Lower leg skin (tissue), 4 donors: ENCODE measurements at regions of chr5 and their contacts with region 1.

Region 1: DNA sequence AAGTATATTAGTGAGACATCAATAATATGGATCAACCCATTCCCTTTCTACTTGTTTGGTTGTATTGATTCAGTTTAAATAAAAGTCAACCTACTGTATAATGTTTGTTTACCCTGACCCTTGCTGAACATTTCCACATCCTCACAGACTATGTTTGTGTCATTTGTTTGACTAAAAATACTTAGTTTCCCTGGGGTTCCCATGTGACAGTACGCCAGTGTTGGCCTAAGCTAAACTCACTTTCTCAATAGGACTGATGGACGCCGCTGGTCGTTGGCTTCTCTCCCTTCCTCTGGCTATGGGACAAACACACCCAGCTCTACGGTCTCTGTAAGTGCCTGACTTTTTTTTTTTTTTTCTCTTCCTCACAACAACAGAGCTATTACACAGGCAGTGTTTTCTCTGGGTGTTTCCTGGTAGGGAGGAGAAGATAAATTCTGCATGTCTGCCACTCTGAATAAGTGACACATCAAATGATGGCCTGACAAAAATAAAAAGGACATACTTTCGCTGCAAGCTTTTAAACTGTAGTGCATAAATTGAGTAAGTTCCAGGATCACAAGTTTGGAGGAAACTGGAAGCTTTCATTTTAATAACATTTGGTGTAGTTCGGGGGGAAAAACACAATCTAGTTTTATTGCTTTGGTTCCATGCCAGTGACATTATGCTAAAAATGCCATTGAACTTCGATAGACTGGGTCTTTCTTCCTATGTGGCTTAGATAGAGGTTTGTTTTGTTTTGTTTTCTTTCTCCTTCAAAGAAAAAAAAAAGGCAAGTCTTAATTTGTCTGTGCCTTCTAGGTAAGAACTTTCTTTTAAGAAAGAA is 101.0 kb downstream of the CD180 start:
- DNase-seq: peak; percentile 88 to 95
- H3K4me3 ChIP-seq: no peak overlapping the region
- CTCF ChIP-seq: no peak
- POLR2A ChIP-seq: no peak

Region 2: DNA sequence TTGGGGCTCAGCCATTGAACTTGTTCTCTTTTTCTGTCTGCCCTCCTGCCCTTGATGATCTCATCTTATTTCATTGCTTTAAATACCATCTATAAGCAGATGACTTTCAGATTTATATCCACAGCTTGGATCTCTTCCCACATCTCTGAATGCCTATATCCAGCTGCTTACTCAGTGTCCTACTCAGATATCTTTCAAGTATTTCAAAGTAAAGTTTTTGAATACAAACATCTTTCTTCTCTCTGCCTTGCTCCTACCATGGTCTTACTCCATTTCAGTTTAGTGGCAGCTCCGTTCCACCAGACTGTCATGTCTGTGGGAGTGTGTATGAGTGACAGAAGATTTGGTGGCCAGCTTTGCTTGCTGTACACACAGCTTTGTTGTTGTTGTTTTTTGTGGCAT is 1109.5 kb before region 1 on chr5:
- intact Hi-C with region 1: no loop called
- DNase-seq: no peak
- H3K4me3 ChIP-seq: no peak overlapping the region
- CTCF ChIP-seq: no peak
- POLR2A ChIP-seq: no peak

Region 3: GRCh38 chr5:66609615-66610014 is 485.9 kb before region 1 on chr5:
- intact Hi-C with region 1: no loop called
- DNase-seq: no peak
- H3K4me3 ChIP-seq: no peak overlapping the region
- CTCF ChIP-seq: no peak
- POLR2A ChIP-seq: no peak

Region 4: GRCh38 chr5:67129768-67130167 is 34.2 kb after region 1 on chr5:
- intact Hi-C with region 1: loop called (anchors 1 kb)
- DNase-seq: no peak
- H3K4me3 ChIP-seq: no peak overlapping the region
- CTCF ChIP-seq: no peak
- POLR2A ChIP-seq: no peak

Region 5: DNA sequence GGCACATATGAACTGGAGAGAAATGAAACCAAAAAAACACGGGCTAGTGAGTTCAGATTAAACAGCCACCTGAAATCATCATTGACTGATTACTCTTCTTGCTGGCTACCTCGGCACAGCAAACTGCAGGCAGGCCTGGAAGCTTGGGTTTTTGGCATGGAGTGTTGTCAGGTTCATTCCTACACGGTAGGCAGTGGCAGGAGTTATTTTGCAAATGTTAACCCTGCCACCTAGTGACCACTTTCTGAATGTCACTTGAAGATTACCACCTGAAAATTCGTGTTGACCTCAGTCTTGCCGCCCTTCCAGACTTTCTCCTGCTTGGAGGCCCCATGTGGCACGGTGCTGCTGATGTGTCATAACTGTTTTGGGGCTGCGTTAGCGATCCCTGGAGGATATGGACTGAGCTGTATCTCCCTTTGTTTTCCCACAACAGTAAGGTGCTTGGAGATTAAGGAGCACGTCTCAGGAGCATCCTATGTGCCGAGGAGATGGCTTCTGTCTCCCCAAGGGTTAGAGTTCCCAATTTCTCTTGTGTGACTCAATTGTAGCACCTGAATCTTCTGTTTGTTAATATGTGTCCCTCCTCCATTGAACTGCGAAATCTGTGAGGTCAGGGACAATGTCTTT is 113.7 kb after region 1 on chr5:
- intact Hi-C with region 1: no loop called
- DNase-seq: peak in 1 of 2 donors; percentile 78
- H3K4me3 ChIP-seq: no peak overlapping the region
- CTCF ChIP-seq: peak in 1 of 3 donors; percentile 66
- POLR2A ChIP-seq: no peak

Region 6: GRCh38 chr5:68685863-68686262 is 1590.3 kb after region 1 on chr5:
- intact Hi-C with region 1: loop called (anchors 5 kb)
- DNase-seq: no peak
- H3K4me3 ChIP-seq: no peak overlapping the region
- CTCF ChIP-seq: no peak
- POLR2A ChIP-seq: no peak